Dendritic cell treated with granulocyte-macrophage colony-stimulating factor and Interleukin-4, amounts not matched to agents 40 ng/mL and 50 ng/mL, for 4 days (primary cell): ENCODE measurements at regions of chr19 and their contacts with region 1.

Region 1: DNA sequence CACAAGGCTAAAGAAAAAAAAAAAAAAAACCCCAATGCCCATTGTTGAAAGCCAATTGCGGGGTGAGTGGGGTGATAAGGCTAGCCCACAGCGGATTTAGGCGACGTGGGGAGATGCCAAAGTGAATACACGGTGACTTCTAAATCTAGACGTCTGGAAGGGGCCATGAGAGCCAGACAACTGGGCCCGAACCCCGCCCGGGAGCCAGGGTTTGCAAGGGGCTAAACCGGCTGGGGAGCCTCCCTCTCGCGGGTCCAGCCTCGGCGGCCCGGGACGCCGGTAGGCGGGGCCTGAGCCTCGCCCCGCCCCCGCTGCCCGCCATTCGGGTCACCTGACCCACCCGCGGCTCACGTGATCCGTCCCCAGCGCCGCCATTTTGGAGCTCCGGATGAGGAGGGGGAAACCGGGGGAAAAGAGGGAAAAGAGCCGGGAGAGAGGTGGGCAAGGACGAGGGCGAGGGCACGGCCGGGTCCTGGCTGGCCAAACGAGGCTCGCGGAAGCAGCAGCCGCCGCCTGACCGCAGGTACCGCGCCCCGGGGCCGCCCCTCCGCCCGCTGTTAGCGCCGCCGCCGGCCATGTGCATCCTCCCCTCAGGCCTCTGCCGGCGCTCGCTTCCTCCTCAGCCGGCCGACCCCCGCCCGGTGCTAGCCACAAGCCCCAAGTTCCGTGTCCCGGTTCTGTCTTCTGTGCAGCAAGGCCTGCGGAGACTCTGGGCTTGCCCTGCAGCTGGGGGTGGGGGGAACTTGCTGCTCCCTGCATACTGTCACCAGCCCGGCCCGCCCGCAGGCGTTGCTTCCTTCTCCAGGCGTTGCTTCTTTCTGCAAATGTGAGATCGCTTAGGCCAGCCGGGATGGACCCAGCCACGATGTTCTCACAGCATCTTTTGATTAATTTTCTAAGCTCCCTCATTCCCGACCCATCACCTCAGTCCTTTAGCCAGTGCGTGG is at the start of gene ZNF507:
- H3K4me3 Mint-ChIP-seq: peak within 1 kb of the TSS; percentile 84
- H3K27ac Mint-ChIP-seq: peak within 1 kb of the TSS; percentile 45
- H3K4me1 Mint-ChIP-seq: peaks cover 10% of the 10 kb centered on the region
- H3K27me3 Mint-ChIP-seq: peaks cover 91% of the 10 kb centered on the region

Region 2: GRCh38 chr19:32265995-32266394 is 79.5 kb before region 1 on chr19:
- intact Hi-C with region 1: no loop called
- H3K4me3 Mint-ChIP-seq: no peak overlapping the region
- H3K27ac Mint-ChIP-seq: no peak overlapping the region
- H3K4me1 Mint-ChIP-seq: no peaks in the 10 kb centered on the region
- H3K27me3 Mint-ChIP-seq: peaks cover 22% of the 10 kb centered on the region

Region 3: GRCh38 chr19:32570081-32570785 is 224.7 kb after region 1 on chr19:
- intact Hi-C with region 1: loop called (anchors 10 kb)
- H3K4me3 Mint-ChIP-seq: no peak overlapping the region
- H3K27ac Mint-ChIP-seq: no peak overlapping the region
- H3K4me1 Mint-ChIP-seq: no peaks in the 10 kb centered on the region
- H3K27me3 Mint-ChIP-seq: peaks cover 65% of the 10 kb centered on the region